MCF 10A (cell line): ENCODE measurements at regions of chr10 and their contacts with region 1.

Region 1: GRCh38 chr10:94320285-94320914 is 42.3 kb downstream of the NOC3L start:
- DNase-seq: peak; percentile 76
- H3K4me3 Mint-ChIP-seq: no peak overlapping the region
- H3K27ac Mint-ChIP-seq: no peak overlapping the region
- H3K4me1 Mint-ChIP-seq: no peaks in the 10 kb centered on the region
- H3K27me3 Mint-ChIP-seq: no peaks in the 10 kb centered on the region
- CTCF ChIP-seq: peak; percentile 79

Region 2: DNA sequence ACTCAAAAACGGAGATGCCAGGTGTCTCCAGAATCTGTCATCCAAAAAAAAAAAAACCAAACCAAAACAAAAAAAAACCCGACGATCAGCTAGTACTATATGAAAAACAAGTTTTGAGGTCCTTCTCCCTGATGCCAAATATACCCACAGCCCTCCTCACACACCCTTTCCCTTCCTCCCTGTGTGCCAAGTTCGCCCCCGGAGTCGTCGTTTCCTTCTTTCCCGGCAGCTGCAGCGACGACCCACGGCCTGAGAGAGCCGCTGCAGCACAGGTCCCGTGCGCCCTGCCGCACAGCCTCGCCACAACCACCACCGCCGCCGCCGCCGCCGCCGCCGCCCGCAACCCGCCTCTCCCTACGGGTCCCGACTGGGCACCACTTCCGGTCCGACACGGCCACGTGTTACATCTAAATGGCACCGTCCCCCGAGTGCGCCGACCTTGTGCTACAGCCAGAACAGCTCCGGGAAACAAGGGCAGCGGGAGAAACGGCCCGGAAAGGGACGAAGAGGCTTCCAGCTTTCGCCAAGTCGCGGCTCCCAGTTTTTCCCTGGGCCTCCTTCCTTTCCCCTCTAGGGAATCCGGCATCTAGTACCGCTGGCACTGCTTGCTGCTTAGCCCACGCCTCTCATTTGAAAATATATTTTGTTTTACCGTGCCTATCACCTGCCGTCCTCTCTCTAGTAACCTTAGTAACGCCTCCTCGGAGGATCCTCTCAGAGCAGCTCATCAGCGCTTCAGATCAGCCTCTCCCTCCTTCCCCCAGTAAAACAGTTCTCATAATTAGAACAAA is 618.0 kb before region 1 on chr10 and contains the start of gene FRA10AC1:
- CTCF ChIA-PET with region 1: interaction called, 11 read pairs
- POLR2A ChIA-PET with region 1: no interaction called
- intact Hi-C with region 1: loop called (anchors 1 kb)
- DNase-seq: peak; percentile 90
- H3K4me3 Mint-ChIP-seq: no peak within 1 kb of the TSS
- H3K27ac Mint-ChIP-seq: no peak within 1 kb of the TSS
- H3K4me1 Mint-ChIP-seq: peaks cover 8% of the 10 kb centered on the region
- H3K27me3 Mint-ChIP-seq: no peaks in the 10 kb centered on the region
- CTCF ChIP-seq: peak; percentile 71
- total RNA-seq, gene FRA10AC1: 19.3 and 25.1 TPM in 2 replicates

Region 3: GRCh38 chr10:93916257-93917063 is 403.9 kb before region 1 on chr10:
- CTCF ChIA-PET with region 1: interaction called, 224 read pairs
- POLR2A ChIA-PET with region 1: interaction called, 20 read pairs
- intact Hi-C with region 1: loop called (anchors 1 kb)
- DNase-seq: peak; percentile 43
- H3K4me3 Mint-ChIP-seq: no peak overlapping the region
- H3K27ac Mint-ChIP-seq: no peak overlapping the region
- H3K4me1 Mint-ChIP-seq: no peaks in the 10 kb centered on the region
- H3K27me3 Mint-ChIP-seq: no peaks in the 10 kb centered on the region
- CTCF ChIP-seq: peak; percentile 46

Region 4: DNA sequence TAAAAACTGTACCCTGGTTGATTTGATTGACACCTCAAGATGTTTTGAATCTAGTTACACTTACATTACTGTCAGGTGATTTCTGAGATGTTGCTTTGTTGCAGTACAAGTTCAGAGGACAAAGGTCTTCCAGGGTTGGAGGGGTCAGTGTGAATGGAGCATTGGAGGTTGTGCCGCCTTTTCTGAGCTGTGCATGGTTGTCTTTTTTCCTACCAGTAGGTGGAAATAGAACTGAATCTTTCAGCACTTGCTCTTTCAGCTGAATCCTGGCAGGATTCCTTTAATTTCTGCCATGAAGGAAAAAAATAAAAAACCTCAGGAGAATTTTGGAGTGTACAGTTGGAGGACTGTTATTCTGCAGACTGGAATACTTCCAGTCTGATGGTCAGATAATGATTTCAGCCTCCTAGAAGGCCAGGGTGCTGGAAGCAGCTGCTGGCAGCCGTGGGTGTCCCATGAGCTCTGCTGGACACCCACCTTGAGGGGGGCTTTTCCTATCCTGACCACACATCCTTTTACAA is 244.0 kb before region 1 on chr10:
- CTCF ChIA-PET with region 1: interaction called, 10 read pairs
- POLR2A ChIA-PET with region 1: interaction called, 3 read pairs
- intact Hi-C with region 1: loop called (anchors 5 kb)
- DNase-seq: peak; percentile 5
- H3K4me3 Mint-ChIP-seq: no peak overlapping the region
- H3K27ac Mint-ChIP-seq: no peak overlapping the region
- H3K4me1 Mint-ChIP-seq: no peaks in the 10 kb centered on the region
- H3K27me3 Mint-ChIP-seq: no peaks in the 10 kb centered on the region
- CTCF ChIP-seq: peak; percentile 23

Region 5: DNA sequence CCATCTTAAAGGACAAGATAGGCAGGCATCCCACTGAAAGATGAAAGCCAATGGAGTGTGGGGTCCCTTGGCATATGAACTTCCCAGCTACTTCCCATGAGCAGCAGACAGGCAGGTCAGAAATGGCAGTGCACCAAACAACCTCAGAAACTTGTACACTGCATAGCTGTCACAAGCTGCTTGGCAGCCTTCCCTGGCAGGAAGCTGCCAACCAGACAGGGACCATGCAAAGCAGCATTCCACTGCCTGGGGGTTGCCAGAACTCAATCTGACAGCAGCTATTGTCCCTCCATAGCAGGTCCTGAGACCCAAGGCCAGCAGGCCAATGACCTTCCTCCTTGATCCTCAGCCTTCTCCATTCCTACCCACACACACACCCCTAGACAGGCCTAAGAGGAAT is 187.2 kb before region 1 on chr10:
- CTCF ChIA-PET with region 1: no interaction called
- POLR2A ChIA-PET with region 1: no interaction called
- intact Hi-C with region 1: no loop called
- DNase-seq: peak; percentile 27
- H3K4me3 Mint-ChIP-seq: no peak overlapping the region
- H3K27ac Mint-ChIP-seq: no peak overlapping the region
- H3K4me1 Mint-ChIP-seq: peaks cover 6% of the 10 kb centered on the region
- H3K27me3 Mint-ChIP-seq: no peaks in the 10 kb centered on the region
- CTCF ChIP-seq: no peak

Region 6: DNA sequence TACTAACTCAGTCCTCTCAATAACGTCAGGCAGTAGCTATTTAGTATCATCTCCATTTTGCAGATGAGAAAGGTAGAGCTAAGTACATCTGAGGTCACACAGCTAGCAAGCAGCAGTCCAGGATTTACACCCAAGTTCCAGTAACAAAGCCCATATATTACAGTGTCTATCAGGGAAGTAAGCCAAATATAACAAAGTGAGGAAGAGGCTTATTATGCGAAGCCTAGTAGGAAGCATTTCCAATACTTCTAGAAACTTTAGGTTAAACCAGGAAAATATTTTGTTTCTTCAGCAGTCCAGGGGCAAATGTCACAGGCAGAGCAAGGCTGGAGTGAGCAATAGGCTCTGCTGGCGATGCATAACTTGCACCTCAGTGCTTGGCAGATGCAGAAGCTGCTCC is 11.5 kb before region 1 on chr10:
- CTCF ChIA-PET with region 1: interaction called, 29 read pairs
- POLR2A ChIA-PET with region 1: no interaction called
- intact Hi-C with region 1: no loop called
- DNase-seq: no peak
- H3K4me3 Mint-ChIP-seq: no peak overlapping the region
- H3K27ac Mint-ChIP-seq: no peak overlapping the region
- H3K4me1 Mint-ChIP-seq: no peaks in the 10 kb centered on the region
- H3K27me3 Mint-ChIP-seq: no peaks in the 10 kb centered on the region
- CTCF ChIP-seq: no peak

Region 7: GRCh38 chr10:94334857-94335256 is 14.5 kb after region 1 on chr10:
- CTCF ChIA-PET with region 1: interaction called, 42 read pairs
- POLR2A ChIA-PET with region 1: no interaction called
- intact Hi-C with region 1: no loop called
- DNase-seq: no peak
- H3K4me3 Mint-ChIP-seq: no peak overlapping the region
- H3K27ac Mint-ChIP-seq: no peak overlapping the region
- H3K4me1 Mint-ChIP-seq: no peaks in the 10 kb centered on the region
- H3K27me3 Mint-ChIP-seq: no peaks in the 10 kb centered on the region
- CTCF ChIP-seq: no peak

Region 8: DNA sequence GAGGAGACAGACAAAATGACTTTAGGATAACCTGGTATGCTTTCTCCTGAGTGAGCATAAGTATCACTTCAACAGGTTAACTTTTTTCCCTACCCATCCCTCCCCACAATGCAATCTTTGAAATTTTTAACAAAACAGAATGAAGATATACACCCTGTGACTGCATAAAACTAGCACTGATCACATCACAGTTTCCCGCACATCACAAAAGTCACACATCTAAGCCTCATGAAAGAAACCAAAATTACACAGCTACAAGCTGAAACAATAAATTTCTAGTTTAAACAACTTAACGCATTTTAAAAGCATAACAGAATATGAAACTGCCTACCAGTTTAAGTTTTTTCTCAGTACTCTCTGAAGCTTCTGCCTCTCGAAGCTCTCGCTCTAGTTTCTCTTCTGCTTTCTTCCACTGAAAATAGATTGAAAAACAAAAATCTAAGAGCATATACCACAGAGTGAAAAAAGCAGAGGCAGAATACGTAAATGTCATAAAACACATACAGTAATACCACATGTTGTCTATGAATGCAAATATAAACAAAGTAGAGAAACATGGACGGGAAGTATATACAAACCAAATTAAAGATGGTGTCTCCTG is 24.2 kb after region 1 on chr10:
- CTCF ChIA-PET with region 1: interaction called, 12 read pairs
- POLR2A ChIA-PET with region 1: no interaction called
- intact Hi-C with region 1: no loop called
- DNase-seq: no peak
- H3K4me3 Mint-ChIP-seq: no peak overlapping the region
- H3K27ac Mint-ChIP-seq: no peak overlapping the region
- H3K4me1 Mint-ChIP-seq: no peaks in the 10 kb centered on the region
- H3K27me3 Mint-ChIP-seq: no peaks in the 10 kb centered on the region
- CTCF ChIP-seq: no peak

Region 9: DNA sequence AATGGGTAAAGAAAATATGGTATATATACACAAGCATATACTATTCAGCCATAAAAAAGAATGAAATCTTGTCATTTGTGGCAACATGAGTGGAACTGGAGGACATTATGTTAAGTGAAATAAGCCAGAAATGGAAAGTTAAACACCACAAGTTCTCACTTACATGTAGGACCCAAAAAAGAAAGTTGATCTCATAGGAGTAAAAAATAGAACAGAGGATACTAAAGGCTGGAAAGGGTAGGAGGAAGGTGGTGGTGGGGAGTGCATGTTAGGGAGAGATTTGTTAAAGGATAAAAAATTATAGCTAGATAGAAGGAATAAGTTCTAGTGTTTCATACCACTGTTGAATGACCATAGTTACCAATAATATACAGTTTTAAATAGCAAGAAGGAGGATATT is 130.4 kb after region 1 on chr10:
- CTCF ChIA-PET with region 1: no interaction called
- POLR2A ChIA-PET with region 1: no interaction called
- intact Hi-C with region 1: no loop called
- DNase-seq: no peak
- H3K4me3 Mint-ChIP-seq: no peak overlapping the region
- H3K27ac Mint-ChIP-seq: no peak overlapping the region
- H3K4me1 Mint-ChIP-seq: no peaks in the 10 kb centered on the region
- H3K27me3 Mint-ChIP-seq: no peaks in the 10 kb centered on the region
- CTCF ChIP-seq: no peak